ENCODE measurements at regions of chr11 and their contacts with region 1.

Region 1: DNA sequence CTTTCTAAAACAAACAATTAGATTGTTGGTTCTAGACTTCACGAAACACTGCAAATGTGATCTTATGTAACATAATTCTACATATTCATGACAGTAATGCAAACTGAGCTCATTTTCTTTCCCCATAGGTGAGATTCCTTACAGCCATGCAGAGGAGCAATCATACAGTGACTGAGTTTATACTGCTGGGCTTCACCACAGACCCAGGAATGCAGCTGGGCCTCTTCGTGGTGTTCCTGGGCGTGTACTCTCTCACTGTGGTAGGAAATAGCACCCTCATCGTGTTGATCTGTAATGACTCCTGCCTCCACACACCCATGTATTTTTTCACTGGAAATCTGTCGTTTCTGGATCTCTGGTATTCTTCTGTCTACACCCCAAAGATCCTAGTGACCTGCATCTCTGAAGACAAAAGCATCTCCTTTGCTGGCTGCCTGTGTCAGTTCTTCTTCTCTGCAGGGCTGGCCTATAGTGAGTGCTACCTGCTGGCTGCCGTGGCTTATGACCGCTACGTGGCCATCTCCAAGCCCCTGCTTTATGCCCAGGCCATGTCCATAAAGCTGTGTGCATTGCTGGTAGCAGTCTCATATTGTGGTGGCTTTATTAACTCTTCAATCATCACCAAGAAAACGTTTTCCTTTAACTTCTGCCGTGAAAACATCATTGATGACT is 1.5 kb downstream of the OR9G1 start:
- DNase-seq: no peak
- H3K4me3 ChIP-seq: no peak overlapping the region
- H3K27ac ChIP-seq: no peak overlapping the region
- H3K4me1 ChIP-seq: no peaks in the 10 kb centered on the region
- H3K27me3 ChIP-seq: no peaks in the 10 kb centered on the region
- CTCF ChIP-seq: no peak

Region 2: DNA sequence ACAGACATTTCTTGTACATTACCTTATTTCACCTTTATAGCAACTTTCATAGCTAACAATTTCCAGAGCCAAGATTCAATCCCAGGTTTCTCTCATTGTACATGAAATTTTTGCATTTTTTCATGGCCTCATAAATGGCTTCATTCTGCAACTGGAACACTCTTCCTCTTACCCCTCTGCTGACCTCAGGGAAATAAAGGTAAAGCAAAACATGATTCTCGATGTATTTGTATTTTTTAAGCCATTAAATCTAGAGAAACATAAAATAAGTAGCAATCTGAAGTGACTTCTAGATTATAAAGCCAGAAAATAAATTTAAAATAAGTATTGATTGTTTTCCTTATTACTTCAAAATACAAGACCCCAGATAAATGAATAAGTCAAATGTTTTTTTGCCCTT is 466.2 kb before region 1 on chr11 and contains the start of gene OR5T2:
- intact Hi-C with region 1: no loop called
- DNase-seq: no peak
- H3K4me3 ChIP-seq: no peak within 1 kb of the TSS
- H3K27ac ChIP-seq: no peak within 1 kb of the TSS
- H3K4me1 ChIP-seq: no peaks in the 10 kb centered on the region
- H3K27me3 ChIP-seq: no peaks in the 10 kb centered on the region
- CTCF ChIP-seq: no peak
- total RNA-seq, gene OR5T2: not detected

Region 3: GRCh38 chr11:56817661-56818060 is 117.3 kb after region 1 on chr11:
- intact Hi-C with region 1: loop called (anchors 5 kb)
- DNase-seq: no peak
- H3K4me3 ChIP-seq: no peak overlapping the region
- H3K27ac ChIP-seq: no peak overlapping the region
- H3K4me1 ChIP-seq: no peaks in the 10 kb centered on the region
- H3K27me3 ChIP-seq: no peaks in the 10 kb centered on the region
- CTCF ChIP-seq: no peak

Region 4: GRCh38 chr11:57219021-57219627 is 518.7 kb after region 1 on chr11:
- intact Hi-C with region 1: no loop called
- DNase-seq: no peak
- H3K4me3 ChIP-seq: no peak overlapping the region
- H3K27ac ChIP-seq: no peak overlapping the region
- H3K4me1 ChIP-seq: peaks cover 0 to 3% (median 0%) of the 10 kb centered on the region in 3 donors
- H3K27me3 ChIP-seq: no peaks in the 10 kb centered on the region
- CTCF ChIP-seq: no peak